ENCODE measurements at regions of chr11 and their contacts with region 1.

Region 1: DNA sequence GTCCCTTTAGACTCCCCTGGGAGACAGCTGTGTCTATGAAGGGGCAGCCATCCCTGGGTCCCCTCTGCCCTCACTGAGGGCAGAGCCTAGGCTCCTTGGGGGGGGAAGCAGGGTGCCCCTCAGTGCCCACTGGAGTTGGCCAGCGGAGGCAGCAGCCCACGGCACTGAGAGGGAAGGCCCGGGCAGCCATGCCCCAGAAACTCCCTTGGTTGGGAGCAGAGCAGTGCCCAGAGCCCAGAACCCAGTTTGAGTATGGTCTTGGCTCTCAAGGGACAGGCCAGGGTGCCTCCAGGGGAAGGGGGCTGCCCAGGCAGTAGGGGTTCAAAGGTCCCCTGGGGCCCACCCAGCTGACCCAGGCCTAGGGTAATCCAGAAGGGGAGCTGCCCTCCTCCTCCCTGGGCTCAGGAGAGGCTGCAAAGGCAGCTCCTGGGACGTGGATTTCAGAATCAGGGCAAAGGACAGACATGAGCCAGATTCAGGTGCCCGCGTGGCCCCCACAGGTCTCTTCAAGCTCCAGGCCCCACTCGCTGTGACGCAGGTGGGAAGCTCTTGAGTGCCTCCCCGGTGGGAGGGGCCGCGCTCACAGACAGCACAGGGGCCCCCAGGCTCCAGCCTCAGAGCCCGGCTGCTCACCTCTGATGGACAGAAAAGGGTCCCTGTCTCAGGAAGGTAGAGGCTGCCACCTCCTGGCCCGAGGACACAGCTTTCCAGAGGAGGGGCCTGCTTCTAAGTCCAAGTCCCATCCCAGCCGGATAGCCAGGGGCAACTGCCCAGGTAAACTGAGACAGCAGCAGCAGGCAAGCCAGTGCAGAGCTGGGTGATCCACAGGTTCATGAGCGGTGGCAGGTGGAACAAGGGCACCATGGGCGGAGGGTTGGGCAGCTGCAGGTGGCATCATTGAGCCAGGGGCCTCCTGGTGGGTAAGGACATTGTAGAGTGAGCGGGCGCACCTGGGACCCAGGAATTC is 2.6 kb downstream of the C11orf21 start:
- DNase-seq: peak; percentile 43
- H3K4me3 Mint-ChIP-seq: no peak overlapping the region
- H3K27ac Mint-ChIP-seq: no peak overlapping the region
- H3K4me1 Mint-ChIP-seq: no peaks in the 10 kb centered on the region
- H3K27me3 Mint-ChIP-seq: no peaks in the 10 kb centered on the region
- CTCF ChIP-seq: peak; percentile 38

Region 2: DNA sequence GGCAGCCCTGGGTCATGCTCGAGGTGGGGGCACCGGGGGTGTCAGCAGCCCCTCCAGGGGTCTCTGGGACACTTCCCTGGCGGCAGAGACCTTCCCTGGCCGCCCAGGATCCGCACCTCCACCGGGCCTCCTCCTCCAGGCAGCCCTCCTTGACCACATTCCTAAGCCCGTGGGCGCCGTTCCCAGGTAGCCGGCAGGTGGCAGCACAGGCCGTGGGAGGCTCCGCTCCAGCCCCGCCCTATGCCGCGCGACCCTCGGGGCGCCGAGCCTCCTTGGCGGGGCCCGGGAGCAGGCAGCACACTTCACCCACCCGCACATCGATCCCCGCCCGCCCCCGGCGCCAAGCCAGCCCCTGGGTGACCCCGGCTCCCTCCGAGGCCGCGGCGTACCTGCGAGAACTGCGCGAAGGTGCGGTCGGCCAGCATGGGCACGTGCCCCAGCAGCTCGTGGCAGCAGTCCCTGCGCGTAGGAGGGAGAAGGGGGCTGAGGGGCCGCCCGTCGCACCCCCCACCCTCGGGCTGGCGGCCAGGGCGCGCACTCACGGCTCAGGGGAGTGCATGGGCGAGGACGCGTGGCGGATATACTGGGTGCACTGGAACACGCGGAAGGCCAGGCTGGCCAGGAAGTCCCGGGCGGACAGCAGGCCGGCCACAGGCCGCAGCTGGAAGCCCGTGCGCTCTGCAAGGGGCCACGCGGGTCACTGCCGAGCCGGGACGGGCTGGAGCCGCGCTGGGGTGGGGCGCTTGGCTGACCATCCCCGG is 132.8 kb before region 1 on chr11:
- CTCF ChIA-PET with region 1: interaction called, 3 read pairs
- POLR2A ChIA-PET with region 1: no interaction called
- intact Hi-C with region 1: loop called (anchors 1 kb)
- DNase-seq: peak; percentile 35
- H3K4me3 Mint-ChIP-seq: no peak overlapping the region
- H3K27ac Mint-ChIP-seq: no peak overlapping the region
- H3K4me1 Mint-ChIP-seq: no peaks in the 10 kb centered on the region
- H3K27me3 Mint-ChIP-seq: no peaks in the 10 kb centered on the region
- CTCF ChIP-seq: peak; percentile 69

Region 3: DNA sequence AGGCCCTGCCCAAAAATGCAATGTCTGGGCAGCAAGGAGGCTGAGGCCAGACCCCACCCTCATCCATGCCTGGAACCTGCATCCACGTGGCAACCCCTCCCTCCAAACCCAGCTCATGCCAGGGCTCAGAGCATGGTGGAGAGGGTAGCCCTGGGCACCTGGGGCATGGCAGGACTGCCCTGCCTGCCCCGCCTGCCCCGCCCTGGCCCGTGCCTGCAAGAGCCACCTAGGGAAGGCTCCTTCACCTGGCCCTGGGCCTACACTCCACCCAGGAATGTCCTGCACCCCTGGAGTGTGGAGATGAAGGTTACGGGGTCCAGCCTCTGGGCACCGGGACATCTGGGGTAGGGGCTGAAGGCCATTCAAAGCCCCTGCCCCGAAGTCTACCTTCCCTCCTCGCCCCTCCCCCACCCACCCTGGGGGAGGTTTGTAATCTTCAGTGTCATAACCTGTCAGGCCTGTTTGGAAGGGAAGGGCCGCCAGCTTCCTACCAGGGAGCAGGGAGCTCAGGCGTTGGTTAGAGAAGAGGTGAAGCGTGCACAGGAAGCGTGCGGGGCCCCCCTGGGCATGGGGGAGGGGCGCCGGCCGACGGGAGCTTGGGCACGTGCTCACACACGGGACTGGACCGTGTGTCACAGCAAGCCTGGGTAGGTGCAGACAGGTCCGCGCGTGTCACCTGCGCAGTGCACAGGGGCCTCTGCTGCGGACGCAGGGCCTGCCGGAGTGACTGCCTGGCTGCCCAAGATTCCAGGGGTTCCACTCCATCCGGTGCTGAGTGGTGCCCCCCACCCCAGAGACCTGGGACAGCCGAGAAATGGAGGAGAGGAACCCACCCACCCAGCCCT is 96.8 kb before region 1 on chr11:
- CTCF ChIA-PET with region 1: interaction called, 67 read pairs
- POLR2A ChIA-PET with region 1: no interaction called
- intact Hi-C with region 1: loop called (anchors 1 kb)
- DNase-seq: peak; percentile 14
- H3K4me3 Mint-ChIP-seq: no peak overlapping the region
- H3K27ac Mint-ChIP-seq: no peak overlapping the region
- H3K4me1 Mint-ChIP-seq: peaks cover 6% of the 10 kb centered on the region
- H3K27me3 Mint-ChIP-seq: peaks cover 4% of the 10 kb centered on the region
- CTCF ChIP-seq: no peak